Thyroid gland (tissue), 4 donors: ENCODE measurements at regions of chr3 and their contacts with region 1.

Region 1: DNA sequence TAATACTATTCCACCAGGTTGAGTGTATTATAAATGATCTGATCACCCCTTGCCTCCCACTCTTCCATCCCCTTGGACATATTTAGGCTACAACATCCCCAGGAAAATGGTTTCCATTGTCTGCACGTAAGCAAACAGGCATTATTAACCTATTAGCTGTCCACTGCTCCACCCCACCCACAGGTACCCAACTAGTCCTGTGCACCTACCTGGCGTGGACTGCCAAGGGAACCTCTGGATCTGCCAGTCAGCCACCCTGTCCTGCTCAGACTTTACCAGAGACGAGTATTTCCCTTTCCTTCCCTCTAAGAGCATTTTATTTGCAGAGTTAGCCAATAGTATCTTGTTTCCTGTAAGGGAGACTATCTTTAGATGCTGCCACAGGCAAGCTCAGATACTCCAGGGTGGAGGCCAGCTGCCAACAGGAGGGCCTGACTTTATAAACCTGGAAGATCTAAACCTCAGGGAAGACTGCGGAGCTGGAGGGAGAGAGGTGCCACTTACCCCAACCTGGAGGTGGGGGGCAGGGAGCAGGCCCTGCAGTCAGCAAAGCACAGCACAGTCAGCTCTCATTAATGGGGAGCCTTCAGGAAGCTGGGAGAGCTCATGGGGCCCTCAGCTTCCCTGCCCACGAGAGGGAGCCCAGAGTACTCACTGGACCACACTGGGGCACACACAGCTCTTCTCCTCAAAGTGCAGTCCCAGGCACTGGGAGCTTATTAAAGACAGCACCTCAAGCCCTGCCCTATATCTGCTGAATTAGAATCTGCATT is at the start of gene CX3CR1:
- DNase-seq: no peak
- H3K4me3 ChIP-seq: no peak within 1 kb of the TSS
- H3K27ac ChIP-seq: no peak within 1 kb of the TSS
- H3K4me1 ChIP-seq: no peaks in the 10 kb centered on the region
- H3K27me3 ChIP-seq: no peaks in the 10 kb centered on the region
- CTCF ChIP-seq: no peak
- POLR2A ChIP-seq: no peak
- total RNA-seq, gene CX3CR1: 0.27 to 1.9 (median 1.1) TPM in 3 of 4 donors, not detected in the other

Region 2: DNA sequence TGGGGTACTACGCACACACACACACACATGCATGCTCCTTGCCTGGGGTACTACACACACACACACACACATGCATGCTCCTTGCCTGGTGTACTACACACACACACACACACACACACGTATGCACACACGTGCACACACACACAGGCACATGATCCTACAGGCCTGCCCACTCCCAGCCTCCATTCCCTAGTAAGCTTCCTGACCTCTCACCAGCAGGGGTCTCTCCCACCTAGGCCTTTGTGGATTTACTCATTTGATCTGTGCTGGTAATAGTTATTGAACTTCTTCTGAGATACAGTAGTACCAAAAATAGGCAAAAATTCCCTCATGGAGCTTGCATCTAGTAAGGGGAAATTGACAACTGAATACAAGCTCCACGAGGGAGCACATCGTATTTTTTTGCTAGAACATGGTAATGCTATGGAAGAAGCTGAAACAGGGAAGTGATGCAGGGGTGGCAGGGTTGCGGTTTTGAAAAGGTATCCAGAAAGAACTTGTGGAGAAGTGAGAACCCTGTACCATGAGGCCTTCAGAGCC is 153.3 kb before region 1 on chr3:
- intact Hi-C with region 1: loop called (anchors 5 kb)
- DNase-seq: peak; percentile 50 to 54
- H3K4me3 ChIP-seq: no peak overlapping the region
- H3K27ac ChIP-seq: no peak overlapping the region
- H3K4me1 ChIP-seq: no peaks in the 10 kb centered on the region
- H3K27me3 ChIP-seq: no peaks in the 10 kb centered on the region
- CTCF ChIP-seq: peak in 4 of 6 experiments; percentile 58 to 67 (median 58)
- POLR2A ChIP-seq: no peak

Region 3: DNA sequence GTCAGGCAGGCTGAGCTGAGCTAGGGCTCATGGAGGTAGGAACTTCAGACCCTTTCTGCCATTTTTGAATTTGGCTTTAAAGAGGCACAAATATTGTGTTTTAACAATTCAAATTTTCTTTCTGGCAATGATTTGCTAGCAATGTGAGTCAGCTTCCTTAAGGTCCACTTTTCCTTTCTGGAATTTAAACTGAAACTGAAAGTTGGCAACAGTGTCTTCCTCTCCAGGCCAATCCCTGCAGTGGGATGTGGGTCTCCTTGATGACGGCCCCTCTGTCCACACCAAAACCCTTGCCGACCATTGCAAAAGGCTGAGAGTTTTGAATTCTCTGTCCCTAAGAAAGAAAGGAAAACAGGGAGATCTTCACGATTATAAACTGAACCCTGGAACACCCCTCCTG is 153.7 kb after region 1 on chr3:
- intact Hi-C with region 1: no loop called
- DNase-seq: no peak
- H3K4me3 ChIP-seq: no peak overlapping the region
- H3K27ac ChIP-seq: no peak overlapping the region
- H3K4me1 ChIP-seq: peaks cover 0 to 3% of the 10 kb centered on the region in 2 donors
- H3K27me3 ChIP-seq: no peaks in the 10 kb centered on the region
- CTCF ChIP-seq: no peak
- POLR2A ChIP-seq: no peak